CD4-positive, alpha-beta memory T cell (primary cell): ENCODE measurements at regions of chr5 and their contacts with region 1.

Region 1: DNA sequence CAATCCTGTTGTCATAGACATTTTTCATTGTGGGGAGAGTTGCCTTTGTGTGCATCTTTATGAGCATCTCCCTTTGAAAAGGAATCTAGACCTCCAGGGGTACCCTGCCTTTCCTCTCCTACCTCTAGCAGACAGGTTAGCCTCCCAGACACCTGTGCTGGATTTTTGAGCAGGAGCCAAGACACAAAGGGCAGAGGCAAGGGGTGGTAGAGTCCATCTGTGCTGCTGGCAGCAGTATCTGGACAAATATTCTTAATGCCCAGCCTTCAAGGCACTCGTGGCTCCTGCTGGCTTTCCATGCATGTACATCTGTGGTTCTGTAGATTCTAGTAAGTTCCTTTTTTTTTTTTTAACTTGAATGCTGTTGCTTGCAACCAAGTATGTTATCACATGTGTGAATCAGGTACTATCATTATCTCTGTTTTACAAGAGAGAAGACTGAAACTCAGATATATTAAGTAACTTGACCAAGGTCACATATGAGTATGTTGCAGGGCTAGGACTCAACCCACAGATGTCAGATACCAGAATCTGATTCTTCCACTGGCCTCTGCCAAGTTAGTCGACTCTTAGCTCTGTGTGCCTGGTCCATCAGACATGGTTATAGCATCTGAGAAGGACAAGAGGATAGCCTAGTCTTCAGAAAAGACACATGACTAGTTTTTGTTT is 32.9 kb upstream of the GPR151 start:
- DNase-seq: no peak
- H3K4me3 ChIP-seq: no peak overlapping the region
- H3K4me3 Mint-ChIP-seq: no peak overlapping the region
- H3K27ac ChIP-seq: no peak overlapping the region
- H3K27ac Mint-ChIP-seq: no peak overlapping the region
- H3K4me1 ChIP-seq: no peaks in the 10 kb centered on the region
- H3K4me1 Mint-ChIP-seq: no peaks in the 10 kb centered on the region
- H3K27me3 ChIP-seq: no peaks in the 10 kb centered on the region
- H3K27me3 Mint-ChIP-seq: peaks cover 4 to 6% of the 10 kb centered on the region in 2 donors

Region 2: DNA sequence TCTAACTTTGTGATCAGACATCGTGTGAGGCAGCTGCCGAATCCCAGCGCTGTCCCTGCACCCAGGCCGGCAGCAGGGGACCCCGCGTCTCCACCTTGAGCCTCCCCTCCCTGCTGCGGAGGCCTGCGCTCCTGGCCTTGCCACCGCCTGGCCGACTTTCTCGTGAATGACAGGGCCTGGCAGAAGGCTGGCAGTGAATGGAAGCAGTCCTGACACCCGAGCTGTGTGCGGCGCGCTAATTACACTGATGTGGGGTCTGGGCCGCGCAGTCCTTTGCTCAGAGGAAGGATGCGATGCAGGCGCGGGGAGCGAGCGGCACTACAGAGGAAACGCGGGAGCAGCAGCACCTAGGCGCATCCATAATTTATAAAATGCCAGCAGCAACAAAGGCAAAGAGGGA is 169.9 kb before region 1 on chr5:
- CTCF ChIA-PET with region 1: no interaction called
- POLR2A ChIA-PET with region 1: no interaction called
- intact Hi-C with region 1: no loop called
- DNase-seq: no peak
- H3K4me3 ChIP-seq: no peak overlapping the region
- H3K4me3 Mint-ChIP-seq: no peak overlapping the region
- H3K27ac ChIP-seq: no peak overlapping the region
- H3K27ac Mint-ChIP-seq: no peak overlapping the region
- H3K4me1 ChIP-seq: no peaks in the 10 kb centered on the region
- H3K4me1 Mint-ChIP-seq: no peaks in the 10 kb centered on the region
- H3K27me3 ChIP-seq: no peaks in the 10 kb centered on the region
- H3K27me3 Mint-ChIP-seq: peaks cover 4 to 9% of the 10 kb centered on the region in 2 donors

Region 3: DNA sequence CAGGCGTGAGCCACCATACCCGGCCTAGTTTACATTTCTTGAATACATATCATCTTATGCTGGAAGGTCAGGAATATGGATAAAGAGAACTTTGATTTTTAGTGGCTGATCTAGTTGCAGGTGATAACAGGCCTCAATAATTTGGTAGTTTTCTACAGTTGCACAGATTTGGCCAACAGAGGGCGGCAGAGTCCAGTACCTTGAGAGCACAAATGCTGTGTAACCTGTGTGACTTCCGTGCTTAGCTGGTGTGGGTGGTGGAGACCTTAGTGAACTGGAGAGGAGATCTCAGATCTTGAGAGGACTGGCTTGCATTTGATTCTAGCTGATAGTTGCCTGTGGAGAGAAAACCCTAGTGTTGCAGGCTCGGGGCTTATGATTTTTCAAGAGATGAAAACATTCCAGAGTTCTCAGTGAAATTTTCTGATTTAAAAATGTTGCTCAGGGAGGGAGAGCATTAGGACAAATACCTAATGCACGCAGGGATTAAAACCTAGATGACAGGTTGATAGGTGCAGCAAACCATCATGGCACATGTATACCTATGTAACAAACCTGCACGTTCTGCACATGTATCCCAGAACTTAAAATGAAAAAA is 15.6 kb before region 1 on chr5:
- CTCF ChIA-PET with region 1: interaction called, 14 read pairs
- POLR2A ChIA-PET with region 1: no interaction called
- intact Hi-C with region 1: no loop called
- DNase-seq: peak; percentile 59 to 66 (median 63)
- H3K4me3 ChIP-seq: no peak overlapping the region
- H3K4me3 Mint-ChIP-seq: no peak overlapping the region
- H3K27ac ChIP-seq: no peak overlapping the region
- H3K27ac Mint-ChIP-seq: peak overlapping the region in 2 of 7 donors; percentile 0 to 30
- H3K4me1 ChIP-seq: no peaks in the 10 kb centered on the region
- H3K4me1 Mint-ChIP-seq: peaks cover 2 to 5% (median 4%) of the 10 kb centered on the region in 4 donors
- H3K27me3 ChIP-seq: no peaks in the 10 kb centered on the region
- H3K27me3 Mint-ChIP-seq: peaks cover 0 to 3% of the 10 kb centered on the region in 2 donors